ENCODE measurements at regions of chr1 and their contacts with region 1.

Region 1: DNA sequence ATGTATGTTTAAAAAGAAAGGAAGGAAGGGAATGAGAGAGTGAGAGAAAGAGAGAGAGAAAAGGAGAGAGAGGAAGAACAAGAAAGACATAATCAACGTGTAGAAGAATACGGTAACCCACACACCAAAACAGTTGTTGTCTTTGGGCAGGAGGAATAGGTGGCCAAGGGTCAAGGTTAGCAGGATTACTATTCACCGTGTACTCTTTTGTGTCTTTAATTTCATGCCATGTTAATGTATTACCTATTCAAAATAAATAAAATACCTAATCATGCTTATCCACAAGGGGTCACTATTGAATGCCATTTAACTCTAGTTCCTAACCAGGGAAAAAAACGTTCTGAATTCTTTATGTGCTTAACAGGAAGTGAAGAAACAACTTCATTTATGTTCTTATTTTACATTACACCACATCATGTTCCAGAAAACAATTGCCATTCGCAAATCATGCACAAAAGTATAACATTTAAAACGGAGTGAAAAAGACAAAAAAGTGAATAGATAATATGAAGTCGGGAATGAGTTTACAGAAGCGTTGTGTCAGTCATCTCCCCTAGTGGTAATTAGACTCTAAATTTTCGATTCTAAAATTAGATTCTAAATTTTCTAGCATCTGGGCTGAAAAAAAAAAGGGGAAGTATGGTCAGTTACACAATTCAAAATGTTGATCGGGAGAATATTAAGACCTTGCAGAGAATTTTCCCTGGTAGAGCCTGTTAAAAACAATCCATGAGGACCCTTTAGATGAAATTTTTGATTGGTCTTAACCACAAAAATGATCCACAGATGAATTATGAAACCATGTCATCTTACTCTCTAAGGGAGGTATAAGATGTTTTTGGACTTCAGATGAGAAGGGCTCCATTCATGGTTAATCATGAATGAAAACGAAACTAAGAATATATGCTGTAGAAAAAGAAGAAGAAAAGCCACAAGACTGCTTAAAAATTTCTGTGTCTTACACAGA is 700 bp upstream of the KMO start:
- DNase-seq: peak in 1 of 2 experiments; percentile 76
- H3K4me3 ChIP-seq: peak overlapping the region; percentile 44; the same call in 1 of the 2 replicates
- H3K27ac ChIP-seq: no peak overlapping the region
- H3K4me1 ChIP-seq: peaks cover 28% of the 10 kb centered on the region
- H3K27me3 ChIP-seq: no peaks in the 10 kb centered on the region
- CTCF ChIP-seq: peak; percentile 82

Region 2: GRCh38 chr1:241592273-241592958 is 60.9 kb after region 1 on chr1:
- CTCF ChIA-PET with region 1: no interaction called
- POLR2A ChIA-PET with region 1: no interaction called
- intact Hi-C with region 1: loop called (anchors 5 kb)
- DNase-seq: peak in 1 of 2 experiments; percentile 87
- H3K4me3 ChIP-seq: no peak overlapping the region; the same call in 1 of the 2 replicates
- H3K27ac ChIP-seq: peak overlapping the region; percentile 78
- H3K4me1 ChIP-seq: peaks cover 36% of the 10 kb centered on the region
- H3K27me3 ChIP-seq: no peaks in the 10 kb centered on the region
- CTCF ChIP-seq: no peak

Region 3: DNA sequence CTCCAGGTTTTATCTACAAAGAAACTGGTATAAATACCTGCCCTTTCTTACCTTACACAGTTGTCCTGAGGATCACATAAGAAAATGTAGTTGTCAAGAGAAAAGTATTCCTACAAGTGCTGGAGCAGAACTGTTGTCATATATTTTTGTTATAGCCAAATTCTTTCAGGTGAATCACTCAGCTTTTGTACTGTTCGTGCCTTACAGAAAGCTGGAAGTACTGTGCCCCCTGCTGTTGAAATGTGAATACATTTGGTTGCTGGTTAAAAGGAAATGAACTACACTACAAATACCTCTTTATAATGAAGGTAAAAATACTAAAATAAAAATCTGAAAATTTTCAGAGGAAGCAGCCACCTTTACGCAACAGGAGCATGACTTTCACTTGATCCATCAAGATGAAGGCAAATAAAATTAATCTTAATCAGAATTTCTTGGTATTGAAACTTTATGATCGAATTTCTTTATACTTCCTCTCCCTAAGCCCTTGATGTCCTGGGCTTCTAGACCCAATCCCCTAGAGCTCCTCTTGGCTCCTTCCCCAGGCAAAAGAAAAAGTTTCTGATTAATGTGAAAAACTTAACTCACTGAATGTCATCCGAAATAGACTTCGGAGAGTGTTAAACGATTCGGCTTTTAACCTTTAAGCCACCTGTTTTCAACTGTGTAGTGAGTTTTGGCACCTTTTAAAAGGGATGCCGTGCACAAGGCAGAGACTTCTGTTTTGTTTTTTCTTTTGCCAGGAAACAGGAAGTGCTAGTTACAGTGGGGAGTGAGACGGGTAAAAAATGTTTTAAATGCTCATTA is 96.2 kb after region 1 on chr1:
- CTCF ChIA-PET with region 1: interaction called, 5 read pairs
- POLR2A ChIA-PET with region 1: interaction called, 4 read pairs
- intact Hi-C with region 1: loop called (anchors 1 kb)
- DNase-seq: peak in 1 of 2 experiments; percentile 64
- H3K4me3 ChIP-seq: no peak overlapping the region
- H3K27ac ChIP-seq: 0 out of 2 replicates have a peak overlapping the region, but pooled peaks have one; percentile 28
- H3K4me1 ChIP-seq: peaks cover 29% of the 10 kb centered on the region
- H3K27me3 ChIP-seq: no peaks in the 10 kb centered on the region
- CTCF ChIP-seq: peak; percentile 69

Region 4: GRCh38 chr1:241834733-241835377 is 303.4 kb after region 1 on chr1:
- CTCF ChIA-PET with region 1: no interaction called
- POLR2A ChIA-PET with region 1: no interaction called
- intact Hi-C with region 1: loop called (anchors 1 kb)
- DNase-seq: peak; percentile 15 to 60
- H3K4me3 ChIP-seq: no peak overlapping the region
- H3K27ac ChIP-seq: no peak overlapping the region
- H3K4me1 ChIP-seq: peaks cover 17% of the 10 kb centered on the region
- H3K27me3 ChIP-seq: no peaks in the 10 kb centered on the region
- CTCF ChIP-seq: peak; percentile 82

Region 5: GRCh38 chr1:241895013-241895412 is 363.5 kb after region 1 on chr1:
- CTCF ChIA-PET with region 1: no interaction called
- POLR2A ChIA-PET with region 1: no interaction called
- intact Hi-C with region 1: loop called (anchors 2 kb)
- DNase-seq: peak in 1 of 2 experiments; percentile 92
- H3K4me3 ChIP-seq: no peak overlapping the region
- H3K27ac ChIP-seq: peak overlapping the region; percentile 29
- H3K4me1 ChIP-seq: peaks cover 14% of the 10 kb centered on the region; the same call in 1 of the 2 replicates
- H3K27me3 ChIP-seq: no peaks in the 10 kb centered on the region
- CTCF ChIP-seq: no peak

Measured in PC-9 (cell line).